ENCODE measurements at regions of chr2 and their contacts with region 1.

Region 1: GRCh38 chr2:62195421-62196277 is at the start of gene B3GNT2:
- DNase-seq: peak; percentile 79 to 84 (median 80)
- H3K4me3 ChIP-seq: peak within 1 kb of the TSS; percentile 84 to 86
- H3K4me3 Mint-ChIP-seq: peak within 1 kb of the TSS; percentile 84 to 92 (median 90)
- H3K27ac ChIP-seq: peak within 1 kb of the TSS; percentile 80
- H3K27ac Mint-ChIP-seq: peak within 1 kb of the TSS; percentile 72 to 95 (median 87)
- H3K4me1 ChIP-seq: peaks cover 41% of the 10 kb centered on the region
- H3K4me1 Mint-ChIP-seq: peaks cover 27 to 35% (median 30%) of the 10 kb centered on the region in 4 donors
- H3K27me3 ChIP-seq: no peaks in the 10 kb centered on the region
- H3K27me3 Mint-ChIP-seq: no peaks in the 10 kb centered on the region
- total RNA-seq, gene B3GNT2: 18.3 to 18.8 TPM

Region 2: GRCh38 chr2:60756191-60757041 is 1439.2 kb before region 1 on chr2 and contains the start of gene PAPOLG:
- CTCF ChIA-PET with region 1: no interaction called
- POLR2A ChIA-PET with region 1: no interaction called
- intact Hi-C with region 1: loop called (anchors 5 kb)
- DNase-seq: peak; percentile 92 to 96 (median 93)
- H3K4me3 ChIP-seq: peak within 1 kb of the TSS; percentile 76 to 92
- H3K4me3 Mint-ChIP-seq: peak within 1 kb of the TSS; percentile 98 to 100 (median 100)
- H3K27ac ChIP-seq: peak within 1 kb of the TSS; percentile 89
- H3K27ac Mint-ChIP-seq: peak within 1 kb of the TSS; percentile 84 to 100 (median 99)
- H3K4me1 ChIP-seq: peaks cover 36% of the 10 kb centered on the region
- H3K4me1 Mint-ChIP-seq: peaks cover 28 to 51% (median 40%) of the 10 kb centered on the region in 4 donors
- H3K27me3 ChIP-seq: no peaks in the 10 kb centered on the region
- H3K27me3 Mint-ChIP-seq: no peaks in the 10 kb centered on the region
- total RNA-seq, gene PAPOLG: 40.1 to 40.3 TPM

Region 3: DNA sequence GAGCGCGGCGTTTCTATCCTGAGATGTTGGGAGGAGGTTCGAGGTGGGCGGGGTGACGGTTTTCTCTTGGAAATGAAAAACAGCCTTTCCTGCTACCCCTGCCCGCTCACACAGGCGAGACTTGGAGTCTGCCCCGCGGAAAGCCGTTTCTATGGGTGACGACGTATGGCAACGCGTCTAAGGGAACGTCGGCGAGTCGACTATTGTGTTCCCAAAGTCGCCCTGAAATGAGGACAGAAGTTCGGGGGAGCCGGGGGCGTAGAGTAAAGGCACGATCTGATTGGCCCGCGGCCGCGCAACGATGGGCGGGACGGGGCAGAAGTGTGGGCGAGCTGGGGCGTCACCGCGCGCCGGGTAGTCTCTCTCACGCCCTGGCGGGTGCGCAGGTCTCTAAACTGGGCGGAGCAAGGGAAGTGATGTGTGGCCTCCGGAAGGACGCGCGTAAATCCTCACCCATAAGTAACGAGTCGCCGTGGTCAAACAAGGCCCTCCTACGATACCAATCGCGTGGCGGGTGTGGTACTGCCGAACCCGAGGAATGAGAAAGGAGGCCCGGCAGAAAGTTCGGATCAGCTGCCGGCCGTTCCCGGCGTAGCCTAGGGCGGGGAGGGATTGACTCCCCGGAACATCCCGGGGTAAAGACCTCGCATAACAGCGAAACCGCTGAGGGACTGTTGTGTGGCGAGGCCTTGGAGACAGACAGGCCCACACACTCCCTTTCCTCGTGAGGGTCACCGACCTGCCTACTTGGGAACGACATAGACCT is 431.4 kb before region 1 on chr2:
- CTCF ChIA-PET with region 1: no interaction called
- POLR2A ChIA-PET with region 1: no interaction called
- intact Hi-C with region 1: loop called (anchors 5 kb)
- DNase-seq: peak; percentile 95 to 98 (median 96)
- H3K4me3 ChIP-seq: peak overlapping the region; percentile 78 to 83
- H3K4me3 Mint-ChIP-seq: peak overlapping the region; percentile 93 to 98 (median 96)
- H3K27ac ChIP-seq: peak overlapping the region; percentile 94
- H3K27ac Mint-ChIP-seq: peak overlapping the region; percentile 95 to 99 (median 99)
- H3K4me1 ChIP-seq: peaks cover 15% of the 10 kb centered on the region
- H3K4me1 Mint-ChIP-seq: peaks cover 8 to 22% (median 15%) of the 10 kb centered on the region in 4 donors
- H3K27me3 ChIP-seq: no peaks in the 10 kb centered on the region
- H3K27me3 Mint-ChIP-seq: peaks cover 0 to 2% of the 10 kb centered on the region in 2 donors

Region 4: DNA sequence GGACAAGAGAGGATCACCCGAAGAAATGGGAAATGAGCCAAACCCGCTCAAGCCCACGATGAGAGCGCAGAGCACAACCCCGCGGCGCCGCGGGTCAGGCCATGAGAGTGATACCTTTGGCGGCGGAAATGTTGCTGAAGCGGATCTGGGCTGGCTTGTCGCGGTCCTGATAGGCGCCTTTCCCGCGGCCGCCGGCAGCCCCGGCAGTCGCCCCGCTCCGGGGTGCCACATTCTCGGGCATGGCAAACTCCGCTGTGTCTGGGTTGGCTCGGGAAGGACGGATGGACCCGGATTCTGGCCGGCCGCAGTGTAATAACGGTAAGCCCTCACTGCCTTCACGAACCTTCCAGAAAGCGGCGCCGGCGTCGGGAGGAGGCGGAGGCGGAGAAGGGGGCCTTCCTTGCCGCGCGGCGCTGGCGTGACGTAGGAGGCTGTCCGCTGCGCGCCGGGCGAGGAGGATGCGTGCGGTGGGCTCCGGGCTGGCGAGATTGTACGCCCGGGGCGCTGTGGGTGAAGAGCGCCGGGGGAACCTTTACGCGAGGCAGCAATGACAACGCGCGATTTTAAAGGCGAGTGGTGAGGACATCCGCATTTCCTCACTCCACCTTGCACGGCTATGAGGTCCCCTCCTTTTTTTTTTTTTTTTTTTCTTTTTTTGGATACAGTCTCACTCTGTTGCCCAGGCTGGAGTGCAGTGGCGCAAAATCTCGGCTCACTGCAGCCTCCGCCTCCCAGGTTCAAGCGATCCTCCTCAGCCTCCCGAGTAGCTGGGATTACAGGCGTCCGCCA is 307.2 kb before region 1 on chr2 and contains the start of gene CCT4:
- CTCF ChIA-PET with region 1: no interaction called
- POLR2A ChIA-PET with region 1: no interaction called
- intact Hi-C with region 1: loop called (anchors 1 kb)
- DNase-seq: peak; percentile 88 to 97 (median 94)
- H3K4me3 ChIP-seq: peak within 1 kb of the TSS; percentile 84 to 86
- H3K4me3 Mint-ChIP-seq: peak within 1 kb of the TSS; percentile 96 to 100 (median 99)
- H3K27ac ChIP-seq: peak within 1 kb of the TSS; percentile 95
- H3K27ac Mint-ChIP-seq: peak within 1 kb of the TSS; percentile 97 to 100 (median 99)
- H3K4me1 ChIP-seq: peaks cover 28% of the 10 kb centered on the region
- H3K4me1 Mint-ChIP-seq: peaks cover 14 to 38% (median 22%) of the 10 kb centered on the region in 4 donors
- H3K27me3 ChIP-seq: no peaks in the 10 kb centered on the region
- H3K27me3 Mint-ChIP-seq: no peaks in the 10 kb centered on the region
- total RNA-seq, gene CCT4: 91.0 to 101 TPM

Region 5: GRCh38 chr2:62084801-62085200 is 110.8 kb before region 1 on chr2:
- CTCF ChIA-PET with region 1: no interaction called
- POLR2A ChIA-PET with region 1: no interaction called
- intact Hi-C with region 1: no loop called
- DNase-seq: no peak
- H3K4me3 ChIP-seq: no peak overlapping the region
- H3K4me3 Mint-ChIP-seq: no peak overlapping the region
- H3K27ac ChIP-seq: no peak overlapping the region
- H3K27ac Mint-ChIP-seq: no peak overlapping the region
- H3K4me1 ChIP-seq: no peaks in the 10 kb centered on the region
- H3K4me1 Mint-ChIP-seq: peaks cover 0 to 2% (median 0%) of the 10 kb centered on the region in 4 donors
- H3K27me3 ChIP-seq: no peaks in the 10 kb centered on the region
- H3K27me3 Mint-ChIP-seq: no peaks in the 10 kb centered on the region

Region 6: DNA sequence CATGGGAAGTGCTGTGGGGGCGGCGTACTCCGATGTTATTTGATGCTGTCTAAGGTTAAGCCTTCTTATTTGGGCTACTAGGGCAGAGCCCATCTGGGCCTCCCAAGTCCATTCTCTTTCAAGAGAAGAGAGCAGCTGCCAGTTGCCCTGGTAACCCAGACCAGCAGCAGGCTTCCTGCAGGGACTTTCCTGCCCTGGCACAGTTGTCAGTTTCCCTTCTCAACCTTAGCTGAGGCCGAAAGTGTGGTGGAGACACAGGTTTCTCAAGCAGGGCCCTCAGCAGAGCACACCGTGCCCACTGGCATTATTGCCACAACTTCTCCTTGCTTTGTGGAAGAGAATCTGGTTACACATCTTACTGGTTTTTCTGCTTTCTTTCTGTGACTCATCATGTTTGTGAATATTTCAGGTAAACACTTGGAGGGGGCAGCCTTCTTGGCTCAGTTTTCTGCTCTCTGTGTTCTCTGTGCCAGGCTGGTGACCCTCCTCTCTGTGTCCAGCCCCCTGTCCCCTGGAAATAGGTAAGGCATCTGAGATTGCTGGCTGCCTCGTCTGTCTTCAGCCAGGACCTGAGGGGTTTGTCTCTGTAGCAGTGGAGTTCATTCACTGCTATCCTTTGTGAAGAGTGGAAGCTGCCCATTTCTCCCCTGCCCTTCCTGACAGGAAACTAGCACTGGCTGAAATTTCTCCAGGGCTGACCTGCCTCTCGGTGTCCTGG is 111.3 kb after region 1 on chr2:
- CTCF ChIA-PET with region 1: interaction called, 3 read pairs
- POLR2A ChIA-PET with region 1: interaction called, 3 read pairs
- intact Hi-C with region 1: loop called (anchors 2 kb)
- DNase-seq: peak; percentile 17 to 60 (median 29)
- H3K4me3 ChIP-seq: no peak overlapping the region
- H3K4me3 Mint-ChIP-seq: peak overlapping the region in 7 of 8 donors; percentile 20 to 75 (median 50)
- H3K27ac ChIP-seq: peak overlapping the region; percentile 2
- H3K27ac Mint-ChIP-seq: peak overlapping the region; percentile 79 to 91 (median 82)
- H3K4me1 ChIP-seq: peaks cover 75% of the 10 kb centered on the region
- H3K4me1 Mint-ChIP-seq: peaks cover 58 to 90% (median 72%) of the 10 kb centered on the region in 4 donors
- H3K27me3 ChIP-seq: no peaks in the 10 kb centered on the region
- H3K27me3 Mint-ChIP-seq: no peaks in the 10 kb centered on the region

Region 7: GRCh38 chr2:62423232-62423631 is 227.6 kb after region 1 on chr2:
- CTCF ChIA-PET with region 1: no interaction called
- POLR2A ChIA-PET with region 1: no interaction called
- intact Hi-C with region 1: no loop called
- DNase-seq: no peak
- H3K4me3 ChIP-seq: no peak overlapping the region
- H3K4me3 Mint-ChIP-seq: no peak overlapping the region
- H3K27ac ChIP-seq: no peak overlapping the region
- H3K27ac Mint-ChIP-seq: no peak overlapping the region
- H3K4me1 ChIP-seq: no peaks in the 10 kb centered on the region
- H3K4me1 Mint-ChIP-seq: no peaks in the 10 kb centered on the region
- H3K27me3 ChIP-seq: no peaks in the 10 kb centered on the region
- H3K27me3 Mint-ChIP-seq: peaks cover 1 to 7% of the 10 kb centered on the region in 2 donors

Region 8: GRCh38 chr2:62705007-62705829 is 509.6 kb after region 1 on chr2 and contains the start of gene EHBP1:
- CTCF ChIA-PET with region 1: no interaction called
- POLR2A ChIA-PET with region 1: no interaction called
- intact Hi-C with region 1: loop called (anchors 2 kb)
- DNase-seq: peak; percentile 97 to 99 (median 97)
- H3K4me3 ChIP-seq: peak within 1 kb of the TSS; percentile 80 to 94
- H3K4me3 Mint-ChIP-seq: peak within 1 kb of the TSS; percentile 86 to 96 (median 94)
- H3K27ac ChIP-seq: peak within 1 kb of the TSS; percentile 50
- H3K27ac Mint-ChIP-seq: peak within 1 kb of the TSS; percentile 86 to 97 (median 91)
- H3K4me1 ChIP-seq: peaks cover 43% of the 10 kb centered on the region
- H3K4me1 Mint-ChIP-seq: peaks cover 28 to 39% (median 31%) of the 10 kb centered on the region in 4 donors
- H3K27me3 ChIP-seq: no peaks in the 10 kb centered on the region
- H3K27me3 Mint-ChIP-seq: no peaks in the 10 kb centered on the region
- total RNA-seq, gene EHBP1: 26.8 to 31.9 TPM

Measured in CD4-positive, alpha-beta memory T cell (primary cell).